ENCODE measurements at regions of chr1 and their contacts with region 1.

Region 1: DNA sequence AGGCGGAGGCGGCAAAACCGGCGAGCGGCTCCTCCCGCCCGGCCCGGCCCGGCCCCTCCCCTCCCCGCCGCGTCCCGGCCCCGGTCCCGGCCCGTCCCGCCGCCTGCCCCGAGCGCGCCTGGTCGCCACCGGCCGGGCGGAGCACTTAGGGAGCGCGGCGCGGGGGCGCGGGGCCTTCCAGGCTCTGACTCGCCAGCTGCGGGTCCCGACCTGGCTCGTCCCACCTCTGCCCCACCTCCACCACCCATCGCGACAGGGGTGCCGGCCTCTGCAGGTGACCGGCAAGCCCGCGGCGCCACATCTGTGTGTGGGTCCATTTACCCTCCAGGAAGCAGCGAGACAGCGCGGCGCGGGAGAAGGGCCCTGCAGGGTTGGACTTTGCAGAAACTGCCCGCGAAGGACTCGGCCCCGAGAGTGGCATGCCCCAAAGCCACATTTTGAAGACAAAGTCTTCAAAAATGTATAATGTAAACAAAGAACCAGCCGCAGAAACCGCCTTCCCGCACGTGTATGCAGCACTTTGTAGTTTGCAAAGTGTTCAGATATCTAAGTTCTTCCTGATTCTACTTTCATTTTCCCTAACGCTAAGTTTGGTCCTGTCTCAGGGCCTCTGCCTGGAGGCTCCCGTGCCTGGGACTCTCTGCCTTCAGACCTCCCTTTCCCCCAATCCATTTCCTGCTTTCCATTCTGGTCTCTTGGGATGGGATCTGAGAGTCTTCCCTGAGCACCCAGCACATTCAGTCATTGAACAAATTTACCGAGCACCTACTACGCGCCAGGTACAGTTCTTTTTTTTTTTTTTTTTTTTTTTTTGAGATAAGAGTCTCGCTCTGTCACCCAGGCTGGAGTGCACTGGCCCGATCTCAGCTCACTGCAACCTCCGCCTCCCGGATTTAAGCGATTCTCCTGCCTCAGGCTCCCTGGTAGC is at the start of gene TMCO4:
- DNase-seq: peak; percentile 74
- H3K4me3 ChIP-seq: peak within 1 kb of the TSS; percentile 40 to 70 (median 68)
- H3K27ac ChIP-seq: peak within 1 kb of the TSS; percentile 82 to 85 (median 84)
- H3K4me1 ChIP-seq: peaks cover 0 to 18% (median 12%) of the 10 kb centered on the region in 4 donors
- H3K27me3 ChIP-seq: no peaks in the 10 kb centered on the region
- CTCF ChIP-seq: no peak
- EP300 ChIP-seq: no peak
- POLR2A ChIP-seq: no peak
- total RNA-seq, gene TMCO4: 16.3 to 24.2 (median 22.0) TPM

Region 2: DNA sequence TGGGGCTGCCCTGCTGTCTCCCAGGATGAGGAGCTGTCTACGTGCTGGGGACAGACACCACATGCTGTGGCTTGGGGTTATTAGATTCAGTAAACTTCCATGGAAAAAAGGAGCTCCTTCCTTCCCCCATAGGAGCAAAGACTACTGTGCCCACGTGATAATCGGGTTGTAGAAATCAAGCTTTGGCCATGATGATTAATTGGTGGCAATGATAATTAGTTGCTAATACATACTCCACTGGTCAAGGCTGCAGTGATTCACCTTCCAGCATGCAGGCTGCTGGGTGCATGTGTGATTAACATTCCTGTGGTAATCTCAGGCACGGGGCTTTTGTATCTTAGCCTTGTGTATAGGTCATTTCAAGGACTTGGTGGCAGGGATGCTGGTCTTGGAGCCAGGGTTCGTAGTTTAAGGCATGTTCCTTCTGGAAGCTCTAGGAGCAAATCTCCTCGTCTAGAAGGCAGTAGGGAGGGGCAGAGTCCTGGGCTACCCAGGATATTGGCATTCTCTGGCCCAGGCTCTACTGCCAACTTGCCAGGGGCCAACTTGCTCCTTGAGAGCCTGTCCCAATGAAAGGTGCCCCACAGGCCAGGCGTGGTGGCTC is 41.8 kb before region 1 on chr1:
- intact Hi-C with region 1: loop called (anchors 5 kb)
- DNase-seq: no peak
- H3K4me3 ChIP-seq: no peak overlapping the region
- H3K27ac ChIP-seq: peak overlapping the region in 1 of 4 donors; percentile 27
- H3K4me1 ChIP-seq: peaks cover 0 to 20% (median 19%) of the 10 kb centered on the region in 4 donors
- H3K27me3 ChIP-seq: no peaks in the 10 kb centered on the region
- CTCF ChIP-seq: no peak
- EP300 ChIP-seq: no peak
- POLR2A ChIP-seq: no peak

Region 3: DNA sequence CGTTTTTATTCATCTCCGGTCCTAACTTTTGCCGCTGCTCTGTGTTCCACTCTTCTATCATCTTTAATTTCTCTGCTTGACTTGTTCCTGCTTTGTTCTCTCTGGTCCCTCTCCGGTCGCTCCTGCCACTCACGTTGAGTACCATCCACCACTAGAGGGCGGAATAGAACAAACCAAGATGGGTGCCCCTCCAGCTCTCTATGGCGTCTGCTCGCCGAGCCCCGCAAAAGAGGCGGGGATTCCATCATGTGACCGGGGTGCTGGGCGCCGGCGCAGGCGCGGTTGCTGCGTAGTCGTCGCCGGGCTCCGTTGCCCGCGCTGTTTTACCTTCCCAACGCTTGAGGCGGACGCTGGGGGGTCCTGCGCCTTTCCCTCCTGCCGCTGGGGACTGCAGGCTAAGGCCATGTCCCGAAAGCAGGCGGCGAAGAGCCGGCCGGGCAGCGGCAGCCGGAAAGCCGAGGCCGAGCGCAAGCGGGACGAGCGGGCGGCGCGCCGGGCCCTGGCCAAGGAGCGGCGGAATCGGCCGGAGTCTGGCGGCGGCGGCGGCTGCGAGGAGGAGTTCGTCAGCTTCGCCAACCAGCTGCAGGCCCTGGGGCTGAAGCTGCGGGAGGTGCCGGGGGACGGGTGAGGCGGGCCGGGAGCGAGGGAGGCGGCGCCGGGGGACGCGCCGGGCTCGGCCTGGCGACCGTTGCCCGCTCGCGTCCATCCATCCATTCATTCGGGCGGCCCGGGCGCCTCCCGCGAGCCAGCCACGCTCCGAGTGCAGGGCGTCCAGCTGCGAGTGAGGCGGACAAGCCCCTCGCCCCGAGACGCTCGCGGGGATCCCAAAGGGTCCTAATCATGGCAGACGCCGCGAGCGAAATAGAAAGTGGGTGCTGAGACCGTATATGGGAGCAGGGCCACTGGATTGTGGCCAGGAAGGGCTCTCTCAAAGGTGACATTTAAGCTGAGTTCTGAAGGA is 82.2 kb after region 1 on chr1 and contains the start of gene OTUD3:
- intact Hi-C with region 1: loop called (anchors 5 kb)
- DNase-seq: peak; percentile 97
- H3K4me3 ChIP-seq: peak within 1 kb of the TSS; percentile 57 to 95 (median 85)
- H3K27ac ChIP-seq: peak within 1 kb of the TSS; percentile 87 to 97 (median 93)
- H3K4me1 ChIP-seq: peaks cover 0 to 35% (median 21%) of the 10 kb centered on the region in 4 donors
- H3K27me3 ChIP-seq: no peaks in the 10 kb centered on the region
- CTCF ChIP-seq: peak; percentile 79 to 89 (median 82)
- EP300 ChIP-seq: peak in 1 of 4 donors; percentile 43
- POLR2A ChIP-seq: peak; percentile 72 to 76
- total RNA-seq, gene OTUD3: 5.4 to 9.2 (median 7.5) TPM